Calu3 (cell line): ENCODE measurements at regions of chr12 and their contacts with region 1.

Region 1: DNA sequence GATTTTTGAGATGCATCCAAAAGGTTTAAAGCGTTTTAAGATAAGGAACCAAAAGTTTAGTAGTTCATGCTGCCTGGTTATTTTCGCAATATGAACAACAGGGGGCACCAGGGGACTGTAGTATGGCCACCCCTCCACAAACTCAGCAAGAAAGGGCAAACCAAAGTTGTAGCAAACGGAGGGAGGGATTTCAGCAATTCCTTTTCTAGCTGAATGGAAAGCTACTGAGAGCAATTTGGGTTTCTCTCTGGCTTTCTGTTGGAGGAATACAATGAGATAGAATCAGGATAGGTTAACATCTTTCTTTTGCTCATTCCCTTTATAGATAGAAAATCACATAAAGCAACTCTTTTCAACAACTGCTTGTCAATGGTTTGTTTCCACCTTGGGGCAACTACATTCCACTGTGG is 62.5 kb downstream of the DRAM1 start:
- DNase-seq: peak; percentile 72
- H3K4me3 Mint-ChIP-seq: no peak overlapping the region
- H3K27ac Mint-ChIP-seq: no peak overlapping the region
- H3K4me1 Mint-ChIP-seq: no peaks in the 10 kb centered on the region
- H3K27me3 Mint-ChIP-seq: peaks cover 49% of the 10 kb centered on the region
- CTCF ChIP-seq: peak; percentile 57

Region 2: GRCh38 chr12:101773650-101774162 is 166.2 kb before region 1 on chr12:
- CTCF ChIA-PET with region 1: no interaction called
- intact Hi-C with region 1: loop called (anchors 10 kb)
- DNase-seq: peak; percentile 70
- H3K4me3 Mint-ChIP-seq: no peak overlapping the region
- H3K27ac Mint-ChIP-seq: no peak overlapping the region
- H3K4me1 Mint-ChIP-seq: peaks cover 7% of the 10 kb centered on the region
- H3K27me3 Mint-ChIP-seq: no peaks in the 10 kb centered on the region
- CTCF ChIP-seq: peak; percentile 88

Region 3: DNA sequence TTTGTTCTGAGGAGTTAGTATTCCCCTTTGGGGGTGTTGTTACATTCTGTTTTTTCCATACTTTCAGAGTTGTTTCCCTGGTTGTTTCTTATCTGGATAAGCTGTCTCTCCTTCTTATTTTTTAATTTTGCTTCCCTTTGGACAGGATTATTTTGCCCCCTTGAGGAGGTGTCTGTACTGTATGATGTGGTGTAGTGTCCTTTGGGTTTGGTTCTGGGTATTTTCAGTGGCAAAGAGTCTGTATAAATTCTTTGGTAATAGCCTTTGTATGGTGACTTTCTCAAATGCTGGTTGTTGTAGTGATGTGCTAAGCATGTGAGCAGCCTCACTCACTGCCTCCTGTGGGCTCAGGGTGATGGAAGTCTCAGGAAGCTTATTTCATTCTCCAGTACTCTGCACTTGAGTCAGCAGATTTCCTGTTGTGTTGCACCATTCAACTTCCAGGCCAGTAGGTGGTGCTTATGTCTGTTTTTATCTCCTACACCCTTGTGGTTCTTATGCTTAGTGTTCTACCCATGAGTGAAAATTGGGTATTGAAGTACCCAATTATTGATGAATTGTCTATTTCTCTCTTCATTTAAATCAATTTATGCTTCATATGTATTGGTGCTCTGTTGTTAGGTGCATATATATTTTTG is 361.1 kb after region 1 on chr12:
- CTCF ChIA-PET with region 1: no interaction called
- intact Hi-C with region 1: loop called (anchors 10 kb)
- DNase-seq: peak; percentile 38
- H3K4me3 Mint-ChIP-seq: no peak overlapping the region
- H3K27ac Mint-ChIP-seq: no peak overlapping the region
- H3K4me1 Mint-ChIP-seq: no peaks in the 10 kb centered on the region
- H3K27me3 Mint-ChIP-seq: no peaks in the 10 kb centered on the region
- CTCF ChIP-seq: no peak

Region 4: GRCh38 chr12:102740141-102740955 is 800.5 kb after region 1 on chr12:
- CTCF ChIA-PET with region 1: no interaction called
- intact Hi-C with region 1: loop called (anchors 1 kb)
- DNase-seq: no peak
- H3K4me3 Mint-ChIP-seq: no peak overlapping the region
- H3K27ac Mint-ChIP-seq: no peak overlapping the region
- H3K4me1 Mint-ChIP-seq: no peaks in the 10 kb centered on the region
- H3K27me3 Mint-ChIP-seq: no peaks in the 10 kb centered on the region
- CTCF ChIP-seq: no peak

Region 5: GRCh38 chr12:102811110-102811737 is 871.4 kb after region 1 on chr12:
- CTCF ChIA-PET with region 1: interaction called, 6 read pairs
- intact Hi-C with region 1: loop called (anchors 5 kb)
- DNase-seq: peak; percentile 73
- H3K4me3 Mint-ChIP-seq: no peak overlapping the region
- H3K27ac Mint-ChIP-seq: no peak overlapping the region
- H3K4me1 Mint-ChIP-seq: peaks cover 13% of the 10 kb centered on the region
- H3K27me3 Mint-ChIP-seq: no peaks in the 10 kb centered on the region
- CTCF ChIP-seq: peak; percentile 53

Region 6: GRCh38 chr12:103548622-103549601 is 1609.1 kb after region 1 on chr12:
- CTCF ChIA-PET with region 1: no interaction called
- intact Hi-C with region 1: loop called (anchors 5 kb)
- DNase-seq: peak; percentile 80
- H3K4me3 Mint-ChIP-seq: no peak overlapping the region
- H3K27ac Mint-ChIP-seq: no peak overlapping the region
- H3K4me1 Mint-ChIP-seq: no peaks in the 10 kb centered on the region
- H3K27me3 Mint-ChIP-seq: peaks cover 58% of the 10 kb centered on the region
- CTCF ChIP-seq: peak; percentile 87